PC-9 (cell line): ENCODE measurements at regions of chr2 and their contacts with region 1.

Region 1: GRCh38 chr2:119407430-119408220 is 24.0 kb upstream of the TMEM37 start:
- DNase-seq: peak; percentile 44 to 57
- H3K4me3 ChIP-seq: no peak overlapping the region
- H3K27ac ChIP-seq: no peak overlapping the region
- H3K4me1 ChIP-seq: peaks cover 5% of the 10 kb centered on the region; the same call in 1 of the 2 replicates
- H3K27me3 ChIP-seq: no peaks in the 10 kb centered on the region
- CTCF ChIP-seq: peak; percentile 98

Region 2: DNA sequence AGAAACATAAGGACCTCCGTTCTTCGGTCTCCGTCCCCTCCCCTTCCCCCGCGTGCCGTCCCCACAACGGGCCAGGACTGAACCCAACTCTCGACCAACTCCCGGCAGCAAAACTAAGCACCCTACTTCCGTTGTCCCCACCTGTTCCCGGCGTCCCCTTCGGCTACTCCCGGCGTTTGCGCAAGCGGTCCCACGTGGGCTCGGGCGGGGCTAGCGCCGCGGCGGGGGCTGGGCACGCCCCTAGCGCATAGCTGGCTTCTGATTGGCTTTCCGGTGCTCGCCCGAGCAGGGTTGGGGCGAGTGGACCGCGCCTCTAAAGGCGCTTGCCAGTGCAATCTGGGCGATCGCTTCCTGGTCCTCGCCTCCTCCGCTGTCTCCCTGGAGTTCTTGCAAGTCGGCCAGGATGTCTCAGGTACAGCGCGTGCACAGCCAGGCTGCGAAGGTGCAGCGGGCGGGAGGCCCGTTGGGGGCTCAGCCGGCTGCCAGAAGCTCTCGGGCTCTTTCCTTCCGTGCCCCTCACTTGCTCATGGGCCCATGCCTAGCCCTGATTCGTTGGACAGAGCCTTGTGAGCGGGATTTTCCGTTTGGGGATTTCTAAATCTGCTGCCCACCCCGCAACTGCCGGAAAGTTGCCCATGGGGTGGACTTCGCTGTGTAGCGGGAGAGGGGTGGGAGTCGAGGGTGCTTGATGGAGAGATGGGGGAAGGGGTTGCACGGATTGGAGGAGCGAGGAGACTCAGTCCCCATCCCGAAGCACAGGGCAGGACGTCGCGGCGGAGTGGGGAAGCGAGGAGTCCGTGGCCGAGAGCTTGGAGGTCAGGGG is 40.8 kb before region 1 on chr2 and contains the starts of genes C2orf76 and DBI:
- CTCF ChIA-PET with region 1: no interaction called
- POLR2A ChIA-PET with region 1: no interaction called
- intact Hi-C with region 1: loop called (anchors 1 kb)
- DNase-seq: peak; percentile 97 to 98
- H3K4me3 ChIP-seq: peak within 1 kb of the TSS; percentile 94
- H3K27ac ChIP-seq: peak within 1 kb of the TSS; percentile 48
- H3K4me1 ChIP-seq: peaks cover 27% of the 10 kb centered on the region
- H3K27me3 ChIP-seq: no peaks in the 10 kb centered on the region
- CTCF ChIP-seq: no peak
- total RNA-seq, gene C2orf76: 11.5 and 12.7 TPM in 2 replicates
- total RNA-seq, gene DBI: 128 and 265 TPM in 2 replicates

Region 3: GRCh38 chr2:119476301-119477021 is 68.8 kb after region 1 on chr2:
- CTCF ChIA-PET with region 1: interaction called, 6 read pairs
- POLR2A ChIA-PET with region 1: interaction called, 3 read pairs
- intact Hi-C with region 1: loop called (anchors 1 kb)
- DNase-seq: peak; percentile 49 to 61
- H3K4me3 ChIP-seq: no peak overlapping the region
- H3K27ac ChIP-seq: no peak overlapping the region
- H3K4me1 ChIP-seq: no peaks in the 10 kb centered on the region
- H3K27me3 ChIP-seq: no peaks in the 10 kb centered on the region
- CTCF ChIP-seq: peak; percentile 100

Region 4: DNA sequence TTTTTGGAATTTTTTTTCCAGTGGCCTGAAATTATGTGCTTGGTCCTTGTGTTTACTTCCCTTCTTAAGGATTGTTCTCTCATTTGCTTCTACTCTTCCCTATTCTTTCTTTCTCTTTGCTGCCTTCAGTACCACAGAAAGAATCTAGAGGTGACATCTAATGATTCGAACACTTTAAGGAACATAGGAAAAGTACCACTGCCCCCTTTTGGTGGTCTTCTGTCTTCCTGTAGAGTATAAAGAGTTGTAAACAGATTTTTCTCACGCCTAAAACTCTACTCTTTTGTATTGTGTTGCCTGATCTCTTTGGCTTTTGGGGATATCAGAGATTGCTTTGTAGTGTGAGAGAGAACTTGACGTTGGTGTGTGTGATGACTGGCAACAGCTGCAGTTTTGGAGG is 123.7 kb after region 1 on chr2:
- CTCF ChIA-PET with region 1: no interaction called
- POLR2A ChIA-PET with region 1: no interaction called
- intact Hi-C with region 1: loop called (anchors 5 kb)
- DNase-seq: no peak
- H3K4me3 ChIP-seq: no peak overlapping the region
- H3K27ac ChIP-seq: no peak overlapping the region
- H3K4me1 ChIP-seq: no peaks in the 10 kb centered on the region
- H3K27me3 ChIP-seq: peaks cover 53% of the 10 kb centered on the region
- CTCF ChIP-seq: peak; percentile 37; the same call in 1 of the 2 replicates

Region 5: GRCh38 chr2:119659601-119660342 is 252.1 kb after region 1 on chr2:
- CTCF ChIA-PET with region 1: no interaction called
- POLR2A ChIA-PET with region 1: no interaction called
- intact Hi-C with region 1: loop called (anchors 1 kb)
- DNase-seq: peak in 1 of 2 experiments; percentile 40
- H3K4me3 ChIP-seq: no peak overlapping the region
- H3K27ac ChIP-seq: no peak overlapping the region
- H3K4me1 ChIP-seq: no peaks in the 10 kb centered on the region
- H3K27me3 ChIP-seq: 0 out of 2 replicates have a peak, but pooled peaks cover 3% of the 10 kb centered on the region
- CTCF ChIP-seq: peak; percentile 96